ENCODE measurements at regions of chr21 and their contacts with region 1.

Region 1: DNA sequence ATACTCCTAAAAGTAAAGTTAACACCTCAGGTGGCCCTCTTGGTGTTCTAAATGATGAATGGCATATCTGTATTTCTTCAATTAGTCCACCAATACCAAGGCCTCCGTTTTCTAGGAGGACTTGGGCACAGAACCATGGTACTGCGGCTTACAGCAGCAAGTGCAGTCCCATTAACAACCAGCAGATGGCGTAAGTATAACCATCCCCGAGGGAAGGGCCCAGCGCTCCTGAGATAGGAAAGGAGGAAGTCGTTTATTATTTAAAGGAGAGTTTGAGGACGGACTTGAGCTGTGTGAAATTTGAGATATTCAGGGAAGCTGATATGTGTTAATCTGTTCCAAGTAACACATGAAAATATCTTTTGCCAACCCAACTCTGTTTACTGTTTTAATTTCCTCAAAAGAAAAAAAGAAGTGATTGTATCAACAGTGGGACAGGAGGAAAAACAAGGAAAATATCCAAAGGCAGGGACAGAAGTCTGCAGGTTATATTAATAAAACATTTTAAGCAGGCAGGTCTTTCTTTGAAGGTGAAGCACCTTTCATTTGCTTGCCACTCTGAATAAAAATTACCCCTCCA is 37.7 kb upstream of the KCNJ15 start:
- DNase-seq: peak; percentile 68 to 83 (median 77)
- H3K4me3 ChIP-seq: no peak overlapping the region
- H3K27ac ChIP-seq: no peak overlapping the region
- H3K4me1 ChIP-seq: peaks cover 0 to 8% of the 10 kb centered on the region in 2 donors
- H3K27me3 ChIP-seq: no peaks in the 10 kb centered on the region
- CTCF ChIP-seq: peak; percentile 91 to 99 (median 96)
- POLR2A ChIP-seq: no peak

Region 2: GRCh38 chr21:38355992-38356797 is 137.1 kb after region 1 on chr21:
- intact Hi-C with region 1: loop called (anchors 2 to 5 kb)
- DNase-seq: peak; percentile 72 to 88 (median 84)
- H3K4me3 ChIP-seq: no peak overlapping the region
- H3K27ac ChIP-seq: no peak overlapping the region
- H3K4me1 ChIP-seq: no peaks in the 10 kb centered on the region
- H3K27me3 ChIP-seq: no peaks in the 10 kb centered on the region
- CTCF ChIP-seq: peak; percentile 89 to 98 (median 95)
- POLR2A ChIP-seq: no peak

Region 3: DNA sequence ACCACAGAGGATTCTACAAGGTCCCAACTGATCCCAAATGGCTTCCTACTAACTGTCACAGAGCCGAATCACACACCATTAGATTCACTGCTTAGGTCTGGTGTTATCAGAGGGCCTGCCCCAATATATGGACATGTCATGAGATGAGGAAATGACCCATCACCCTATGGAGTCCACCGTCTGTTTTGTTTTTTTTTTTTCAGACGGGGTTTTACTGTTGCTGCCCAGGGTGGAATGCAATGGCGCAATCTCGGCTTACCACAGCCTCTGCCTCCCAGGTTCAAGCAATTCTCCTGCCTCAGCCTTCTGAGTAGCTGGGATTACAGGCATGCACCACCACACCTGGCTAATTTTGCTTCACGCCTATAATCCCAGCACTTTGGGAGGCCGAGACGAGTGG is 502.8 kb after region 1 on chr21:
- intact Hi-C with region 1: no loop called
- DNase-seq: no peak
- H3K4me3 ChIP-seq: no peak overlapping the region
- H3K27ac ChIP-seq: no peak overlapping the region
- H3K4me1 ChIP-seq: no peaks in the 10 kb centered on the region
- H3K27me3 ChIP-seq: no peaks in the 10 kb centered on the region
- CTCF ChIP-seq: no peak
- POLR2A ChIP-seq: no peak